ENCODE measurements at regions of chrX and their contacts with region 1.

Region 1: DNA sequence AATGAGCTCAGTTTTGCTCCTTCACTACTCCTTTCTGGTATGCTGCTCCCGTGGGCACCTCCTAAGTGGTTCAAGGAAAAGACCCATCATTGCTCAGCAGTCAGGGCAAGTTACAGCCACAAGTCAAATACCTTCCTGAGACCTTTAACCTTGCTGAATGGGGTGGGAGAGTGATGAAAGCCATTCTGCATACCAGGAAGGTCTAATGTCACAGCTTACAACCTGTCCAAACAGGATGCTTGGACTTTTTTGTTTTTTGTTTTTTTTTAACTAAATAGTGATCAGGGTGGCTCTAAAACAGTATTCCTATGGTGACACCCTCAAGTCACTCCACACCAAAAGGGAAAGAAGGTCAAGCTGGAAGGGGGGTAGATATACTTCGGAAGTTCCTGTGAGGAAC is 93.1 kb downstream of the GPC3 start:
- DNase-seq: peak; percentile 71 to 80
- H3K4me3 ChIP-seq: no peak overlapping the region
- H3K4me3 Mint-ChIP-seq: peak overlapping the region; percentile 68
- H3K27ac Mint-ChIP-seq: peak overlapping the region; percentile 96
- H3K4me1 ChIP-seq: peaks cover 13% of the 10 kb centered on the region
- H3K4me1 Mint-ChIP-seq: peaks cover 8% of the 10 kb centered on the region
- H3K27me3 ChIP-seq: no peaks in the 10 kb centered on the region
- H3K27me3 Mint-ChIP-seq: no peaks in the 10 kb centered on the region
- CTCF ChIP-seq: no peak

Region 2: GRCh38 chrX:133709486-133709885 is 182.8 kb before region 1 on chrX:
- CTCF ChIA-PET with region 1: no interaction called
- POLR2A ChIA-PET with region 1: no interaction called
- intact Hi-C with region 1: no loop called
- DNase-seq: no peak
- H3K4me3 ChIP-seq: no peak overlapping the region
- H3K4me3 Mint-ChIP-seq: no peak overlapping the region
- H3K27ac Mint-ChIP-seq: no peak overlapping the region
- H3K4me1 ChIP-seq: no peaks in the 10 kb centered on the region
- H3K4me1 Mint-ChIP-seq: no peaks in the 10 kb centered on the region
- H3K27me3 ChIP-seq: no peaks in the 10 kb centered on the region
- H3K27me3 Mint-ChIP-seq: no peaks in the 10 kb centered on the region
- CTCF ChIP-seq: no peak

Region 3: DNA sequence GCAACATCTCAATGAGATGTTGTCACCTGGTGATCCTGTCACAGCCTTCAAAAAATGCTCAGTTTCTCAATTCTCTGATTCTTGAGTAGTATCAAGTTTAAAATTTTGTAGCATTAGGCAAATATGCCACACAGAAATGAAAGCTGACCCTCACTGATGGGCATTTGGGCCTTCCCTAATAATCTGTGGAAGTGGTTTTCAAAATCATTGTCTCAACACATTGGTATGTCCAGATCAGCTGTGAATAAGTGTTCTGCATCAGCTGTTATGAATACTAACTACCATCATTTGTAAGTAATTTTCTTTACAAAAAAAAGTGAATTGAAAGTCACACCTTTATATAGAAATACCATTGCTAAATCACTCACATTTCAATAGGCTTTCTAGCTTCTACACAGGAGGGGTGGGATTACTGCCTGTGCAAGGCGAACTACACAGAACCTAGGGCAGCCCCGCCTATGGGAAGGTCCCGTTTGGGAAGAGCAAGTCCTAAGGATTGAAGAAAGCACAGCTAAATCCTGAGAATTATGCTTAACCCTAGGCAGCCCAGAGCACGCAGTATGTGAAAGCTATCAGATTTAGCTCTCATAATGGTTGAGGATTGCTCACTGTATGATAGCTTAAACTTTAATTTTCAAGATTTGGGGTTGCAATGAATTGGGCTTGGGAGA is 19.6 kb after region 1 on chrX:
- CTCF ChIA-PET with region 1: interaction called, 3 read pairs
- POLR2A ChIA-PET with region 1: no interaction called
- intact Hi-C with region 1: loop called (anchors 2 kb)
- DNase-seq: no peak
- H3K4me3 ChIP-seq: no peak overlapping the region
- H3K4me3 Mint-ChIP-seq: no peak overlapping the region
- H3K27ac Mint-ChIP-seq: no peak overlapping the region
- H3K4me1 ChIP-seq: 0 out of 2 replicates have a peak, but pooled peaks cover 6% of the 10 kb centered on the region
- H3K4me1 Mint-ChIP-seq: peaks cover 12% of the 10 kb centered on the region
- H3K27me3 ChIP-seq: no peaks in the 10 kb centered on the region
- H3K27me3 Mint-ChIP-seq: no peaks in the 10 kb centered on the region
- CTCF ChIP-seq: no peak

Region 4: GRCh38 chrX:134338527-134338926 is 446.2 kb after region 1 on chrX:
- CTCF ChIA-PET with region 1: no interaction called
- POLR2A ChIA-PET with region 1: no interaction called
- intact Hi-C with region 1: no loop called
- DNase-seq: no peak
- H3K4me3 ChIP-seq: no peak overlapping the region
- H3K4me3 Mint-ChIP-seq: no peak overlapping the region
- H3K27ac Mint-ChIP-seq: no peak overlapping the region
- H3K4me1 ChIP-seq: no peaks in the 10 kb centered on the region
- H3K4me1 Mint-ChIP-seq: no peaks in the 10 kb centered on the region
- H3K27me3 ChIP-seq: no peaks in the 10 kb centered on the region
- H3K27me3 Mint-ChIP-seq: peaks cover 5% of the 10 kb centered on the region
- CTCF ChIP-seq: no peak